Naive thymus-derived CD8-positive, alpha-beta T cell (primary cell): ENCODE measurements at regions of chr9 and their contacts with region 1.

Region 1: DNA sequence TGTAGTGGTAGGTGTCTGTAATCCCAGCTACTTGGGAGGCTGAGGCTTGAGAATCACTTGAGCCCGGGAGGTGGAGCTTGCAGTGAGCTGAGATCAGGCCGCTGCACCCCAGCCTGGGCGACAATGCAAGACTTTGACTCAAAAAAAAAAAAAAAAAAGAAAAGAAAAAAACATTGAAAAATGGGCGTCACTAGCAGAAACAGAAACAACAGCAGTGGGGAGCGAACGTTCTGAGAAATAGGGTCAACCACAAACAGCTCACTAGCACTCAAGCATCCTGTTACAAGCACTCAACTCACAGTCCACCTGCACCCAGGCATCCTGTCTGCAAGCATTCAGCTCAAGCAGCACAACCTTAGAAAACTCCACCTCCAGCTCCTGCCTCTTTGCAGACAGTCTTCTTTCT is 17.2 kb downstream of the TRIM14 start:
- DNase-seq: peak; percentile 59 to 94 (median 80)
- ATAC-seq: peak; percentile 96 to 98
- H3K4me3 Mint-ChIP-seq: peak overlapping the region; percentile 60 to 86 (median 74)
- H3K27ac Mint-ChIP-seq: peak overlapping the region; percentile 88 to 99 (median 96)
- H3K4me1 Mint-ChIP-seq: peaks cover 38 to 93% (median 84%) of the 10 kb centered on the region in 4 donors
- H3K27me3 Mint-ChIP-seq: no peaks in the 10 kb centered on the region

Region 2: DNA sequence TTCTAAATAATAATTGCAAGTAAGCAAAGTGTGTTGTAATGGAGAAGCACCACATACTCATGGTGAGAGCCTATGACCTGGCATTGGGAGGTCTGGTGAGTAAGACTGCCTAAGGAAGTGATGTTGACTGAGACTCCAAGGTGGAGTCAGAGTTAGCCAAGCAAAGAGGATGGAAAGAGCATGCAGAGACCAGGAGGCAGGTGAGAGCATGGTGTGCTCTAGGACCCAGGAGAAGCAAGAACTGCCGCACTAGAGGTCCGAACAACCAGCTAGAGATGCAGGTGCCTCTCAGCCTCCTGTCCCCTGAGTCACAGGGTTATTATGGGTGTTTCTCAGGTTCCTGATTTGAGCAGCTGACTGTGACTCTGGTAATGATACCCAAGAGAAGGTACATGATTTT is 91.4 kb before region 1 on chr9:
- POLR2A ChIA-PET with region 1: no interaction called
- DNase-seq: no peak
- ATAC-seq: peak; percentile 46 to 67
- H3K4me3 Mint-ChIP-seq: peak overlapping the region in 1 of 10 donors; percentile 20
- H3K27ac Mint-ChIP-seq: peak overlapping the region in 9 of 10 donors; percentile 9 to 79 (median 69)
- H3K4me1 Mint-ChIP-seq: peaks cover 19 to 32% (median 26%) of the 10 kb centered on the region in 4 donors
- H3K27me3 Mint-ChIP-seq: no peaks in the 10 kb centered on the region

Region 3: GRCh38 chr9:98192503-98193335 is 90.8 kb after region 1 on chr9 and contains the start of gene CORO2A:
- POLR2A ChIA-PET with region 1: interaction called, 23 read pairs
- DNase-seq: peak; percentile 48 to 76 (median 57)
- ATAC-seq: peak; percentile 66 to 76
- H3K4me3 Mint-ChIP-seq: peak within 1 kb of the TSS; percentile 81 to 93 (median 88)
- H3K27ac Mint-ChIP-seq: peak within 1 kb of the TSS; percentile 65 to 92 (median 86)
- H3K4me1 Mint-ChIP-seq: peaks cover 22 to 46% (median 38%) of the 10 kb centered on the region in 4 donors
- H3K27me3 Mint-ChIP-seq: no peaks in the 10 kb centered on the region
- polyA plus RNA-seq, gene CORO2A: 5.2 to 11.7 (median 9.5) TPM

Region 4: GRCh38 chr9:98333703-98334582 is 232.1 kb after region 1 on chr9:
- POLR2A ChIA-PET with region 1: no interaction called
- DNase-seq: no peak
- ATAC-seq: no peak
- H3K4me3 Mint-ChIP-seq: no peak overlapping the region
- H3K27ac Mint-ChIP-seq: no peak overlapping the region
- H3K4me1 Mint-ChIP-seq: peaks cover 0 to 2% (median 0%) of the 10 kb centered on the region in 4 donors
- H3K27me3 Mint-ChIP-seq: peaks cover 8 to 35% (median 22%) of the 10 kb centered on the region in 5 donors

Region 5: DNA sequence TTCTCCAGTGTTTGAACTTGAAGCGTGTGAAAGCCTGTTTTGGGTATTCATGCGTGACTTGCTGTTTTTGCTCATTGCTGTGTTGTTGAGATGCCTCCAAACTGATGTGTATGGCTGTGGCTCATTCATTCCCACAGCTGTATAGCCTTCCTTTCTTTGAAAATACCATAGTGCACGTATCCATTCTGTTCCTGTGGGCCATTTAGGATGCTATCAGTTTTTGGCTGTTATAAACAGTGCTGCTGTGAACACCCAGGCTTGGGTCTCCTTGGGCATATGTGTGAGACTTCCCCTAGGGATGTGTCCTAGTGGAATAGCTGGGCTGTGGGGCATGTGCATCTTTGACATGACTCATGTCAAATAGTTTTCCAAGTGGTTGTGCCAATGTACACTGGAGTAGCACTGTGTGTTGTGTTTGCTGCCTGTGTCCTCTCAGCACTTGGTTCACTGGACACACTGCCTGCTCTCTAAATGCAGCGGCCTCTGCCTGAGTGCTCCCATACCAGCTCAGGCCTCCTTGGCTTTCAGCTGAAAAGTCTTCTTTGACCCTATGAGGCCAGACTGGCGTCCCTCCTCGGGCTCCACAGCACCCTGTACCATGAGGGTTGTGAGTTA is 256.2 kb after region 1 on chr9:
- POLR2A ChIA-PET with region 1: no interaction called
- DNase-seq: no peak
- ATAC-seq: no peak
- H3K4me3 Mint-ChIP-seq: no peak overlapping the region
- H3K27ac Mint-ChIP-seq: no peak overlapping the region
- H3K4me1 Mint-ChIP-seq: no peaks in the 10 kb centered on the region
- H3K27me3 Mint-ChIP-seq: peaks cover 8 to 26% (median 15%) of the 10 kb centered on the region in 5 donors